Breast epithelium (tissue), 4 donors: ENCODE measurements at regions of chrX and their contacts with region 1.

Region 1: DNA sequence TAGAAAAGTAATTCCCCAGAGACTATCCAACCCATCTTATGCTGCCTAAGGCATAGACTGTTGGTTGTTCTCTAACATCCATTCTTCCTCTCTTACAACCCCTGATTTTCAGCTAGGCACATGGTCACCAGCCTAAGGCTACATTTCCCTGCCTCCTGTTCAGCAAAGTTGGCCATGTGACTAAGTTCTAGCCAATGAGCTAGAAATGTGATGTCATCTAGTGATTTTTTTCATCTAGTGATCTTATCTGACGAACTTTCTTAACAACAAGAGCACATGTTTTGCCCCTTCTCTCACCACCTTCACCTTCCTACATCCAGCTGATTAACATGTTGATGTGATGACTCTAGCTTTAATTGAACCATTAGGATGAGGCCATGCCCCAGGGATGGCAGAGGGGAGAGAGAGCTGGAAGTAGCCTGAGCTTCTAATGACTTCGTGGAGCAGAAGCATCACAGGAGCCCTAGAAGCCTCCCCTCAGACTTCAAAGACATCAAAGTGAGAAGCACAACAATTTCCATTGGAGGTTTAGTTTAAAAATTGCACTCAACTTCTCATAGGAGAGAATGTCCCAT is 102.2 kb upstream of the S100G start:
- DNase-seq: no peak
- H3K4me3 ChIP-seq: no peak overlapping the region
- H3K27ac ChIP-seq: no peak overlapping the region
- H3K4me1 ChIP-seq: no peaks in the 10 kb centered on the region
- H3K27me3 ChIP-seq: peaks cover 0 to 21% of the 10 kb centered on the region in 2 donors
- CTCF ChIP-seq: no peak
- POLR2A ChIP-seq: no peak

Region 2: DNA sequence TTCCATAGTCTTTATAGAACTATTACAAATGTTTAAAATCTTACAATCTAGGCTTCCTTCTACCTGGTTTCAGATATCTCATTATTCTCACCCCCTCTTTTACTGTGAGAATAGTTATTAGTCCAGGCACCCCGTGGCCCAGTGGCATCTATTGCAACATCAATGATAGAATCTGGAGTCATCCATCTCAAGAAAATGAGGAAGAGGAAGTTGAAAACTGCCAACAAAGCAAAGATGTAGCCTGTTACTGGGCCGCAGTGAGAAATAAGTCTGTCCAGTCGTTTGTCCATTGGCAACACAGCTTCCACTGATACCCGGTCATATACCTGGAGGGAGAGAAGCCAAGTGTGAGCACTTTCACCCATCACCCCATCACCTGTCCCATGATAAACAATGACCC is 1226.3 kb before region 1 on chrX:
- intact Hi-C with region 1: no loop called
- DNase-seq: no peak
- H3K4me3 ChIP-seq: no peak overlapping the region
- H3K27ac ChIP-seq: no peak overlapping the region
- H3K4me1 ChIP-seq: no peaks in the 10 kb centered on the region
- H3K27me3 ChIP-seq: peaks cover 0 to 18% of the 10 kb centered on the region in 2 donors
- CTCF ChIP-seq: no peak
- POLR2A ChIP-seq: no peak

Region 3: GRCh38 chrX:16559206-16559619 is 11.4 kb after region 1 on chrX:
- intact Hi-C with region 1: no loop called
- DNase-seq: no peak
- H3K4me3 ChIP-seq: no peak overlapping the region
- H3K27ac ChIP-seq: no peak overlapping the region
- H3K4me1 ChIP-seq: no peaks in the 10 kb centered on the region
- H3K27me3 ChIP-seq: peaks cover 0 to 6% of the 10 kb centered on the region in 2 donors
- CTCF ChIP-seq: no peak
- POLR2A ChIP-seq: no peak

Region 4: DNA sequence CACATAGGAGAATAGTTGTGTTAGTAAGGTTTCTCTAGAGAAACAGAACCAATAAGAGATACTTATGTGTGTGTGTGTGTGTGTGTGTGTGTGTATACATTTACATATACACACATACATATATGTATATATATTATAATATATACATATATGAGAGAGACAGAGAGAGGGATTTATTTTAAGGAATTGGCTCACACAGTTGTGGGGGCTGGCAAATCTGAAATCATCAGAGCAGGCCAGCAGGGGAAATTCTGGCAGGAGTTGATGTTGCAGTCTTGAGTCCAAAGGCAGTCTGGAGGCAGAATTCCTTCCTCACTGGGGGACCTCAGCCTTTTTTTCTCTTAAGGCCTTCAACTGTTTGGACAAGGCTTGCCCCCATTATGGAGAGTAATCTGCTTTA is 788.6 kb after region 1 on chrX:
- intact Hi-C with region 1: loop called (anchors 10 kb)
- DNase-seq: no peak
- H3K4me3 ChIP-seq: no peak overlapping the region
- H3K27ac ChIP-seq: no peak overlapping the region
- H3K4me1 ChIP-seq: no peaks in the 10 kb centered on the region
- H3K27me3 ChIP-seq: peaks cover 0 to 10% of the 10 kb centered on the region in 2 donors
- CTCF ChIP-seq: no peak
- POLR2A ChIP-seq: no peak